CD8-positive, alpha-beta memory T cell (primary cell): ENCODE measurements at regions of chr10 and their contacts with region 1.

Region 1: GRCh38 chr10:97914837-97915211 is 65.2 kb downstream of the GOLGA7B start:
- DNase-seq: peak; percentile 41 to 73 (median 53)
- H3K4me3 ChIP-seq: no peak overlapping the region
- H3K4me3 Mint-ChIP-seq: no peak overlapping the region
- H3K27ac ChIP-seq: no peak overlapping the region
- H3K27ac Mint-ChIP-seq: peak overlapping the region in 1 of 8 donors; percentile 14
- H3K4me1 ChIP-seq: no peaks in the 10 kb centered on the region
- H3K4me1 Mint-ChIP-seq: peaks cover 5 to 12% (median 8%) of the 10 kb centered on the region in 3 donors
- H3K27me3 ChIP-seq: peaks cover 8% of the 10 kb centered on the region
- H3K27me3 Mint-ChIP-seq: peaks cover 9 to 18% of the 10 kb centered on the region in 2 donors

Region 2: GRCh38 chr10:97903128-97904017 is 11.5 kb before region 1 on chr10:
- CTCF ChIA-PET with region 1: interaction called, 12 read pairs
- POLR2A ChIA-PET with region 1: no interaction called
- DNase-seq: no peak
- H3K4me3 ChIP-seq: no peak overlapping the region
- H3K4me3 Mint-ChIP-seq: no peak overlapping the region
- H3K27ac ChIP-seq: no peak overlapping the region
- H3K27ac Mint-ChIP-seq: peak overlapping the region in 1 of 8 donors; percentile 89
- H3K4me1 ChIP-seq: no peaks in the 10 kb centered on the region
- H3K4me1 Mint-ChIP-seq: no peaks in the 10 kb centered on the region
- H3K27me3 ChIP-seq: no peaks in the 10 kb centered on the region
- H3K27me3 Mint-ChIP-seq: peaks cover 18 to 40% of the 10 kb centered on the region in 2 donors

Region 3: DNA sequence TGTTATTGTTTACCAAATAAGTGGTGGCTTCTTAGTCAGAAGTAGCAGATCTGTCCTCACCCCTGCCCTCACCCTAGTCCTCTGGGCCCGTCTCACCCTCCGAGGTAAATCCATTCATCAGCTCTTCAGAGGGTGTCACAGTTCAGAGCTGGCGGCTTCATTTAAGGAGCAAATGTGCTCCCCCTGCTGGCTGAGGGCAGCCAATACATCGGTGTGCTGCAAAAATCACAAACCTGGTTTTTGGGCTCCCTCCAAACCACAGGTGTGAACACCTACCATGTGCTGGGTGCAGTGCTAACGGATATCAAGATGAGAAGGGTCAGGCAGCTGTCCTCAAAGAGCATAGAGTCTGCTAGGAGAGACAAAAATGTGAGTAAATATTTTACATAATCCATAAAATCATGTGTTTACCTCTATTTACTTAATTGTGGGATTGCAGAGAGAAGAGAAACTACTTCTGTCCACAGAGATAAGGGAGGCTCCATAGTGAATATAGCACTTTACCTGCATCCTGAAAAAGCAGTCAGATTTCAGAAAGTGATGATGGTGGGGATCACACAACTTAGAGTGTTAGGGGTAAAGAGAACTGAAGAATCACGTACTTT is 131.1 kb after region 1 on chr10:
- CTCF ChIA-PET with region 1: interaction called, 17 read pairs
- POLR2A ChIA-PET with region 1: no interaction called
- DNase-seq: peak; percentile 31 to 59 (median 32)
- H3K4me3 ChIP-seq: no peak overlapping the region
- H3K4me3 Mint-ChIP-seq: peak overlapping the region in 1 of 7 donors; percentile 67
- H3K27ac ChIP-seq: no peak overlapping the region
- H3K27ac Mint-ChIP-seq: peak overlapping the region in 1 of 8 donors; percentile 48
- H3K4me1 ChIP-seq: no peaks in the 10 kb centered on the region
- H3K4me1 Mint-ChIP-seq: peaks cover 3 to 6% (median 3%) of the 10 kb centered on the region in 3 donors
- H3K27me3 ChIP-seq: peaks cover 17% of the 10 kb centered on the region
- H3K27me3 Mint-ChIP-seq: peaks cover 16 to 48% of the 10 kb centered on the region in 2 donors